Endothelial cell of umbilical vein (primary cell): ENCODE measurements at regions of chr4 and their contacts with region 1.

Region 1: GRCh38 chr4:52038103-52038912 is at the start of gene SGCB:
- DNase-seq: peak; percentile 42
- H3K4me3 ChIP-seq: peak within 1 kb of the TSS; percentile 59 to 98 (median 72)
- H3K27ac ChIP-seq: peak within 1 kb of the TSS; percentile 9
- H3K4me1 ChIP-seq: peaks cover 20% of the 10 kb centered on the region
- H3K27me3 ChIP-seq: peaks cover 26 to 36% of the 10 kb centered on the region in 2 experiments
- CTCF ChIP-seq: no peak
- POLR2A ChIP-seq: peak; percentile 24
- total RNA-seq, gene SGCB: 54.0 and 54.4 TPM in 2 replicates

Region 2: DNA sequence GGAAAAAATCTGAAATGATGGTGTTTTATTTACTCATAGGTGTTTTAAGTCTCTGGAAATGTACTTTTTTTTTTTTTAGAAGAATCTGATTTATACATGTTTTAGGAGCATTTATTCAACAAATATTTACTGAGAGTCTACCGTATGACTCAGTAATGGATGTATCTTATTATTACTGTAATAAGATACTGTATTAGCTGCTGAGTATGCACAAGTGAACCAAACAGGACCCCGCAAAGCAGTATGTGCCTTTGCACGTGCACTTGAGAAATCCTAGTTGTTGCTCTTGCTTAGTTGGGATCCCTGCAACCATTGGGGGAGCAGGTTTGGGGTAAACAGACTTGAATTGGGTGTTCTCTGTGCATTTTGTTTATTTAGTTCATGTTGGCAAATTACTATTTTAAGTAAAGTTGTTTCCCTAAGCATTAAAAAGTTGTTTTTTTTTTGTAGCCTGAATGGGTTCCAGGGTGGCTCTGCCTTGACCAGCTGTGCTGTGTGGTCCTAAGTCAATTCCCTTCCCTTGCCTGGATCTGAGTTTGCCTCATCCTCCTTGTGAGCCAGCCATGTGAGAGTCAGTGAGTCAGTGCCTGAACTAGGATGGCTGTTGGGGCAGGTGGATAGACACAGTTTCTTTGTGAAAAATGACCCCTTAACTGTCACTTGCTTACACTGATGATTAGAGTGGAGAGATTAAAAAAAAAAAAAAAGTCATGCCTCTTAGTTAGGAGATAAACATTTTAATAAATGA is 167.7 kb before region 1 on chr4:
- CTCF ChIA-PET with region 1: no interaction called
- POLR2A ChIA-PET with region 1: no interaction called
- dilution Hi-C with region 1: no loop called
- intact Hi-C with region 1: no loop called
- DNase-seq: no peak
- H3K4me3 ChIP-seq: no peak overlapping the region
- H3K27ac ChIP-seq: no peak overlapping the region
- H3K4me1 ChIP-seq: no peaks in the 10 kb centered on the region
- H3K27me3 ChIP-seq: no peaks in the 10 kb centered on the region
- CTCF ChIP-seq: no peak
- POLR2A ChIP-seq: no peak

Region 3: DNA sequence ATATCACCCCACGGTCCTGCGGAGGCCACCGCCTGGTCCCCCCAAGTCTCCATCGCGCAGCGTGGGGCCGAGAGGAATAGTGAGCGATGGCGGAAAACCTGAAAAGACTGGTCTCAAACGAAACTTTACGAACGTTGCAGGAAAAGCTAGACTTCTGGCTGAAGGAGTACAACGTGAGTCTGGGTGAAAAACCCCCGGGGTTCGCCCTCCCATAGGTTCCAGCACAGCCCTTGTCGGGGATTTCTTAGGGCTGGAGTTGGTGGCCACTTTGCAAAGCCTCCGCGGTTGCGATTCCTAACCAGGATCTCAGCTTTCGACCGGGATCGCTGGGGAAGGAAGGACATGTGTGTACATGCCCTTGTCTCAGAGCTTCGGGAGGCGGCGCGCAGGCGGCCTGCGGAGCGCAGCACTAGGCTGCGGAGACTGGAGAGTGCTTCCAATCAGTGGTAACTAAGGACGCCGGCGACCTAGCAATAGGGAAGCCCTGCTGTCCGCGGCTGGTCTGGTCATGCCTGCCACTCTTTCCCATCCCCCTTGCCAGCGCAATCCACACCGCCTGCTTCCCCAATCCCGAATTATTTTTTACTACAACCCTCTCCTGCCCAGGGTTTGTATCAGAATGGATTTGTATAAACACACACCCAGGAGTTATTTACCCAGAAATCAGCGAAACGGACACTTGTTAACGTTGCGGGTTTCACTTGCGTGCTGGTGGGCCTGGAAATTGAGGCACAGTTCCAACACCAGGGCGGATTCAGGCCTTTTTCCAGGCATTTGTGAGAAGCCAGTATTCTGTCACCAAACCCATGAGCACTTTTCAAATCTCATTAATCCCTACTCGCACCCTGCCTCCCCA is 13.5 kb after region 1 on chr4:
- CTCF ChIA-PET with region 1: interaction called, 13 read pairs
- POLR2A ChIA-PET with region 1: interaction called, 5 read pairs
- dilution Hi-C with region 1: no loop called
- intact Hi-C with region 1: loop called (anchors 1 kb)
- DNase-seq: peak; percentile 90
- H3K4me3 ChIP-seq: peak overlapping the region; percentile 71 to 74 (median 72)
- H3K27ac ChIP-seq: peak overlapping the region; percentile 10
- H3K4me1 ChIP-seq: peaks cover 12% of the 10 kb centered on the region
- H3K27me3 ChIP-seq: peaks cover 23 to 41% of the 10 kb centered on the region in 2 experiments
- CTCF ChIP-seq: no peak
- POLR2A ChIP-seq: peak; percentile 69

Region 4: DNA sequence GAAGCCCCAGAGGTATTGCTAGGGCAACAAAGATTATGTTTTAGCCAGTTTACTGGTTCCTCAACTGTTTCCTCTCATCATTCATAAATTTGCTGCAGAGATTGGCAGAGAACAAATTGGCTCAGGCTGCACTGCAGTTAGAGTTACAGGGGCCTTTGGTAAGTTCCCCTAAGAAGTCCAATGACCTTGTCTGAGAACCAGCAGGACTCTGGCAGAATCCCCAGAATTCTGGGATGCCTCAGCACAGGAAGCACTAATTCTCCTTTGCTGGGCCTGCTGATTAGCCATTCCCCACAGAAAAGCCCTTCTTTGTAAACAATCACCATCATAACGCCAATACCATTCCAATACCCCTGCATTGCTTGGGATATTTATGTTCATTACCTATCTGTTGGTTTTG is 469.5 kb after region 1 on chr4:
- CTCF ChIA-PET with region 1: no interaction called
- POLR2A ChIA-PET with region 1: no interaction called
- dilution Hi-C with region 1: no loop called
- intact Hi-C with region 1: no loop called
- DNase-seq: no peak
- H3K4me3 ChIP-seq: no peak overlapping the region
- H3K27ac ChIP-seq: no peak overlapping the region
- H3K4me1 ChIP-seq: no peaks in the 10 kb centered on the region
- H3K27me3 ChIP-seq: no peaks in the 10 kb centered on the region
- CTCF ChIP-seq: no peak
- POLR2A ChIP-seq: no peak